Activated naive CD4-positive, alpha-beta T cell treated with anti-CD3 and anti-CD28 coated beads for 36 hours (primary cell): ENCODE measurements at regions of chr14 and their contacts with region 1.

Region 1: DNA sequence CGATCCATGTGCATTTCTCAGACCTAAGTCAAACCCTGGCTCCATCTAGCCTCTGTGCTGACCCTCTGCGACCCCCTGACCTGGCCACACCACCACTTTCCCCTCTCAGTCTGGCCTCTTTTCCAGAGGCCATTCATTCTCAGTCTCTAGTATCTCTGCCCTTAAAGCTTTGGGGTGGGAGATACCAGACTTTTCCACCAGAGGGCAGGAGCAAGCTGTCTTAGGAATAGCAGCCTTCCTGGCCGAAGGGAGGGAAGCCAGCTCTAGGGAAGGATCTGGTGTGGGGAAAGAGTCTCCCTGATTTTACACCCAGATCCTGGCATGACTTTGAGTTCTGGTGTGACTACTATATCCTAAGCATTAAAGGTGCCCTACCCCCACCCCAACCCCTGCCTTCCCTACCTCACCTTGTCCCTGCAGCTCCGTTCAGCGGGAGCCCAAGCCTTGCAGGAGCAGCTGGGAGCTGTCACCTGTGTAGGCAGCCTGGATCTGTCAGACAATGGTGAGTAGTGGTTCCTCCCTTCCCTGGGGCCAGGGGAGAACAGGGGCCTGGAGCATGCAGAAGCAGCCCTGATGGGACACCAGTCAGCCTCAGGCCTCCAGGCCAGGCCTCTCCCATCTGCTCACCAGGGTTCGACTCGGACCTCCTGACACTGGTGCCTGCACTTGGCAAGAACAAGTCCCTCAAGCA is 6.6 kb downstream of the CARMIL3 start:
- DNase-seq: peak; percentile 89
- H3K4me3 Mint-ChIP-seq: no peak overlapping the region
- H3K27ac Mint-ChIP-seq: peak overlapping the region; percentile 38
- H3K4me1 Mint-ChIP-seq: peaks cover 5% of the 10 kb centered on the region
- H3K27me3 Mint-ChIP-seq: peaks cover 2% of the 10 kb centered on the region

Region 2: DNA sequence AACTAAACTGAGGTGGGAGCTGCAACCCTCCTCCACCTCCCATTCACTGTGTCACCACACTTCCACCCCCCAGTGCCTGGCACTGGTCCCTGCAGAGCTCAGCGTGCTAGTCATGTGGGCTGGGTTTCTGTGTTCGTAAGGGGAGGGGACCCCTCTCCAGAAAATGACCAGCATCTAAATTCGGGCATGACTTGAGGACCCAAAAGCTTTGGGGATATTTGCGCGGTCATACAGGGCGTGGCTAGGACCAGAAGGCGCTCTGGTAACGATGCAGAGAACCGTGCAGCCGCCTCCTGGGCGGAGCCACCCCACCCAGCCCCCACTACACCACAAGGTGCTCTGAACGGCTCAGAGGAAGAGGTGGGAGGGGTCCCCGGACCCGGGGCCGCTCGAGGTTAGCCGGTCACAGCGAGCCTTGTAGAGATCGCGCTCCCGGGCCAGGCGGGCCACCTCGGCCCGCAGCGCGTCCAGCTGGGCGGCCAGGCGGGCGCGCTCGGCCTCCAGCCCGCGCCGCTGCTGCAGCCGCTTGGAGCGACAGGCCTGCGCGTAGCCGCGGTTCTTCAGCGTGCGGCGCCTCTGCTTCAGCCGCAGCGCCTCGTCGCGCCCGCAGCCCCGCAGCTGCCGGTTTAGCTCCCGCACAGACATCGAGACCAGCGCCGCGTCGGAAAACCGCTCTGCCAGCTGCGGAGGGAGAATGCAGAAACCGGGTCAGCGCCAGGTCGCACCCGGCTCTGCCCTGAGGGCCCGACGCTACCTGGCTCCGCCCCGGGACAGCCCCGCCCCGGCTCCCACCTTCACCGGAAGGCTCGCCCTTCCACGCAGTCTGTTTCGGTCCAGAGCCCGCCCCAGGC is 22.7 kb after region 1 on chr14:
- CTCF ChIA-PET with region 1: interaction called, 64 read pairs
- intact Hi-C with region 1: no loop called
- DNase-seq: peak; percentile 74
- H3K4me3 Mint-ChIP-seq: peak overlapping the region; percentile 74
- H3K27ac Mint-ChIP-seq: no peak overlapping the region
- H3K4me1 Mint-ChIP-seq: peaks cover 15% of the 10 kb centered on the region
- H3K27me3 Mint-ChIP-seq: no peaks in the 10 kb centered on the region

Region 3: DNA sequence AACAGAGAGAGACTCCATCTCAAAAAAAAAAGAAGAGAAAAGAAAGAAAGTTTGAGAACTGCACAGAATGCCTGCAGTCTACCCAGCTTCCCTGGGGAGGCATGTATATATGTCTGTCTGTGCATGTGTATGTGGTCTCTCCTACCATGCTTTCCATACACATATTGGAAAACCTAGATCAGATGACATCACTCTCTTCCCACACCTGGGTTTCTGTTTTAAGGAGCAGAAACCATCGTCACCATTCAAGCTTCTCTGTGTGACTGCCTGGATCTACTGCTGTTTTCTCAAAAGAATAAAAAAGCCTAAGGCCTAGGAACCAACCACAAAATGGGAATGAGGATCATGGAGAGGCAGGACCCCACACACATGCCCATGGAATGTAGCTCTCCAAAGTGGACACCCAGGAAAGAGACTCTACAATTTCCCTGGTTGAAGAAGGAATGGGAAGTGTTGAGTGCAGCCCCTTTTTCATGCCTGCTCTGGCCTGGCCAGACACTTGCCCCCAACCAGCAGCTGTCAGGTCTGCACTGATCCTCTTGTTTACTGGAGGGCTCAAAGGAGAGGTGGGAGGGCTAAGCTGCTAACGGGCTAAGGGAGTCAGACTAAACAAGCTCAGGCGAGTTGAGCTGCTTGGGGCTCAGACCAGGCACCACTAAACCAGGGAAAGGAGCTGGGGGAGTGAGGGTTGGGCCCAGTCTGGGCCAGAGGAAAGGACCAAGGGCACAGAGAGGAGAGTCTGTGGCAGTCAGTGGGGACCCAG is 28.0 kb after region 1 on chr14:
- CTCF ChIA-PET with region 1: interaction called, 386 read pairs
- intact Hi-C with region 1: loop called (anchors 1 kb)
- DNase-seq: no peak
- H3K4me3 Mint-ChIP-seq: no peak overlapping the region
- H3K27ac Mint-ChIP-seq: no peak overlapping the region
- H3K4me1 Mint-ChIP-seq: peaks cover 7% of the 10 kb centered on the region
- H3K27me3 Mint-ChIP-seq: no peaks in the 10 kb centered on the region

Region 4: DNA sequence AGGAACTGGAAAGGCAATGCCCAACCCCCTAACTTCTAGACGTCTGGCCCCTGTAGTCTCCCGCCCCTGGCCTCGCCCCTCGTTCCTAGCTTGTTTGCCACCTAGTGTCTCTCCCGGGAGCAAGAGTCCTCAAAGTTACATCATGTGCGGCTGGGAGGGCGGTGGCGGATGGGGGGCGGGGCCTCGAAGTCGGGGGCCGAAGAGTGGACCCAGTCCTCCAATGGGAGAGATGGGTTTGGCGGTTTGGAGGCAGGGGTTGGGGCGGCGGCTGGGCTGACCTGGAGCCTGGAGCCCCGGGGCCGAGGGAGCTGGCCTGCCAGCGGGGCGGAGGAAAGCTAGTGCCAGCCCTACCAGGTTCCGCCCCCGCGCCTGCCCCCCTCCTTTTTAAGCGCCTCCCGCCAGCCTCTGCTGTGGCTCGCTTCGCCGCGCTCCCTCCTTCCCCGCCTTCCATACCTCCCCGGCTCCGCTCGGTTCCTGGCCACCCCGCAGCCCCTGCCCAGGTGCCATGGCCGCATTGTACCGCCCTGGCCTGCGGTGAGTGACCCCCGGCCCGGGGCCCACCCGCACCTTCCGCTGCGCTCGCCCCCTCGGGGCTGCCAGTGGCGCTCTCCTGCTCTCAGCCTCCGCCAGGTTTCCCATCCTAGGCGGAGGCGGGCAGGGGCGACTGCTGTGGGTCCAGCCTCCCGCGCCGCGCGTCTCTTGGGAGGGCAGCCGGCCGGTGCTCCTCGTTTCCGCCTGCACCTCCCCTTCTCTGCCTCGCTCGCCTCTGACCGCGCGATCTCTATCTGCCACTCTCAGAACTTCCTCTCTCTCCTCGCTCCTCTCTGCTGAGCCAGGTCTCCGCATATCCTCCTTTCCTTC is 35.7 kb after region 1 on chr14 and contains the start of gene PCK2:
- CTCF ChIA-PET with region 1: interaction called, 386 read pairs
- intact Hi-C with region 1: loop called (anchors 1 kb)
- DNase-seq: peak; percentile 94
- H3K4me3 Mint-ChIP-seq: peak within 1 kb of the TSS; percentile 99
- H3K27ac Mint-ChIP-seq: peak within 1 kb of the TSS; percentile 98
- H3K4me1 Mint-ChIP-seq: peaks cover 32% of the 10 kb centered on the region
- H3K27me3 Mint-ChIP-seq: no peaks in the 10 kb centered on the region
- total RNA-seq, gene PCK2: 117 TPM

Region 5: DNA sequence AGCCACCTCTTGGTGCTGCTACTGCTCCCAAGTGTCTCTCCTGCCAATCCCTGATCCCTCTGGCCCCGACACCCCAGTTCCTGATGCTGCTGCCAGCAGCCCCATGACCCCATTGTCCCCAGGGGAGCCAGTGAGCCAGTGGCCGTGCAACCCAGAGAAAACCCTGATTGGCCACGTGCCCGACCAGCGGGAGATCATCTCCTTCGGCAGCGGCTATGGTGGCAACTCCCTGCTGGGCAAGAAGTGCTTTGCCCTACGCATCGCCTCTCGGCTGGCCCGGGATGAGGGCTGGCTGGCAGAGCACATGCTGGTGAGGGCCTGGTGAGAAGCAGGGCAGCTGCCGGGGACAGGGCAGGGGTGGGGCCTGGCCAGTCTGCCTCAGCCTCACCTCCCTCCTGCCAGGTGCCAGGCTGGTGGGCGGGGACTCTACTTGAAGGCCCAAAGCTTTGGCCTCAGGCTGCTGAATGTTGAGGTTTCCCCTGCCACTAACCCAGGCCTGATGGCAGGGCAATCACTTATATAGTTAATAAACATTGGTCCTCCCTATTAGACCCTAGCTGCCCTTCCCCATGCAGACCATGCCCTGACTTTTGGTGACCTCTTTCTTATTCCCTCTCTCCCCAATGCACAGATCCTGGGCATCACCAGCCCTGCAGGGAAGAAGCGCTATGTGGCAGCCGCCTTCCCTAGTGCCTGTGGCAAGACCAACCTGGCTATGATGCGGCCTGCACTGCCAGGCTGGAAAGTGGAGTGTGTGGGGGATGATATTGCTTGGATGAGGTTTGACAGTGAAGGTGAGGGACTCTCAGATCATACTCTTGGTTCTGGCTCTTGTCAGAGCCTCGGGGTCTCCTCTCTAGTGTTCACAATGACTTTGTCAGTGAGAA is 40.8 kb after region 1 on chr14:
- CTCF ChIA-PET with region 1: interaction called, 386 read pairs
- intact Hi-C with region 1: loop called (anchors 1 kb)
- DNase-seq: no peak
- H3K4me3 Mint-ChIP-seq: no peak overlapping the region
- H3K27ac Mint-ChIP-seq: no peak overlapping the region
- H3K4me1 Mint-ChIP-seq: peaks cover 17% of the 10 kb centered on the region
- H3K27me3 Mint-ChIP-seq: no peaks in the 10 kb centered on the region

Region 6: GRCh38 chr14:24108336-24108874 is 50.0 kb after region 1 on chr14:
- CTCF ChIA-PET with region 1: interaction called, 237 read pairs
- intact Hi-C with region 1: loop called (anchors 1 kb)
- DNase-seq: no peak
- H3K4me3 Mint-ChIP-seq: peak overlapping the region; percentile 50
- H3K27ac Mint-ChIP-seq: peak overlapping the region; percentile 97
- H3K4me1 Mint-ChIP-seq: peaks cover 10% of the 10 kb centered on the region
- H3K27me3 Mint-ChIP-seq: no peaks in the 10 kb centered on the region

Region 7: GRCh38 chr14:24310646-24311604 is 252.5 kb after region 1 on chr14 and contains the start of gene LTB4R:
- CTCF ChIA-PET with region 1: interaction called, 6 read pairs
- intact Hi-C with region 1: loop called (anchors 1 kb)
- DNase-seq: peak; percentile 71
- H3K4me3 Mint-ChIP-seq: peak within 1 kb of the TSS; percentile 71
- H3K27ac Mint-ChIP-seq: peak within 1 kb of the TSS; percentile 68
- H3K4me1 Mint-ChIP-seq: peaks cover 64% of the 10 kb centered on the region
- H3K27me3 Mint-ChIP-seq: no peaks in the 10 kb centered on the region
- total RNA-seq, gene LTB4R: 10.6 to 11.4 TPM